ENCODE measurements at regions of chrX and their contacts with region 1.

Region 1: GRCh38 chrX:129654419-129655165 is at the start of gene APLN:
- DNase-seq: peak; percentile 28
- H3K4me3 Mint-ChIP-seq: peak within 1 kb of the TSS; percentile 77
- H3K27ac Mint-ChIP-seq: no peak within 1 kb of the TSS
- H3K4me1 Mint-ChIP-seq: peaks cover 7% of the 10 kb centered on the region
- H3K27me3 Mint-ChIP-seq: peaks cover 53% of the 10 kb centered on the region
- CTCF ChIP-seq: no peak
- total RNA-seq, gene APLN: 0.35 TPM in 1 of 2 replicates, not detected in the other

Region 2: DNA sequence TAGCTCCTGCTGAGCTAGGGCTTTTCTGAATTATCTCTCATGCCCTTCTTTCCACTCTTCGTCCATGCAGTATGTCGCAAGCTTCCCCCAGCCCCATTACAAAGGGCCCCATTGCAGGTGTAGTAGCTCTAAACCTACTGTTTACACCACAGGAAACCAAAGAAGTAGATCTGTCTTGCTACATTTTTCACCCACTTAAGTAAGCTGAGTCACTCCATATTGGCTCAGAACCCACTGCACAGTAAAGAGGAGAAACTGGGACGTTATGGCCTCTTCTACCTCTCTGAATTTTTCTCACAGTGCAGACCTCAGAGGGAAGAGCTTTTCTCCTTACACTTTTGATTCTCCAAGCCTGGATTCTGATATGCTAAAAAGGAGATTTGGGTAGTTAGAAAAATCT is 331.5 kb before region 1 on chrX:
- CTCF ChIA-PET with region 1: no interaction called
- intact Hi-C with region 1: no loop called
- DNase-seq: no peak
- H3K4me3 Mint-ChIP-seq: no peak overlapping the region
- H3K27ac Mint-ChIP-seq: no peak overlapping the region
- H3K4me1 Mint-ChIP-seq: no peaks in the 10 kb centered on the region
- H3K27me3 Mint-ChIP-seq: no peaks in the 10 kb centered on the region
- CTCF ChIP-seq: no peak

Region 3: DNA sequence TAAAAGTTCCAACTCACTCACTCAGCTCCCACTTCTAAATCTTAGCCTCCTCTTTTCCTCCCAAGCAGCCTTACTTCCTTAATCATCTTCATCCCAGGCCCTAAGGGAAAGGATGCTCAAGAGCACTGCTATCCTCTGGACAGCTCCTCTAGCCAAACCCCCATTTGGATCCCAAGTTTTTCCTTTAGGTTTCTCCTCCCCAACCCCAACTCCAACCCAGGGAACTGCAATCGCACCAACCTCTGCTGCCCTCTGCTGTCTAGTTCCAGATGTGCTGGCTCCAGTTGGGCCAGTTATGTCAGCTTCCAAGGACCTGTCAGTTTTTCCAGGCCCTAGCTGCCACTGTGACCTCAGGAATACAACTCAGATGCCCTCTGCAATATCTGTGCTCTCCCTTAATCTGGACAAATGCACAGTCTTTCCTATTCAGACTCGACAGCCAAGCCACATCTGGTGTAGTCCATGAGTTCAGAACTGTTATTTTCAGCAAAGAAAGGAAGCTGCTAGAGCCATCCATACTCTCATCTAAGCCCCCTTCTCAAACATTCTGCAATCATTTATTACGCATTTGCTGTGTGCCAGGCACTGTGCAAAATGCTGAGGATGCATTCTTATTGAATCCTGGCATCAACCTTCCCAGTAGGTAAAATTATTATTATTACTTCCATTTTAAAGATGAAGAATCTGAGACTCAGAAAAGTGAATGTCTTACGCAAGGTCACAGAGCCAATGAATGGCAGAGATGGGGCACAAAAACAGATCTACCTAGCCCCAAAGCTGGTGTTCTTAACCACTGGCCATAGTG is 71.9 kb after region 1 on chrX:
- CTCF ChIA-PET with region 1: interaction called, 17 read pairs
- intact Hi-C with region 1: loop called (anchors 1 kb)
- DNase-seq: peak; percentile 68
- H3K4me3 Mint-ChIP-seq: no peak overlapping the region
- H3K27ac Mint-ChIP-seq: no peak overlapping the region
- H3K4me1 Mint-ChIP-seq: no peaks in the 10 kb centered on the region
- H3K27me3 Mint-ChIP-seq: peaks cover 65% of the 10 kb centered on the region
- CTCF ChIP-seq: peak; percentile 55

Region 4: GRCh38 chrX:130106071-130106470 is 451.5 kb after region 1 on chrX:
- CTCF ChIA-PET with region 1: interaction called, 11 read pairs
- intact Hi-C with region 1: no loop called
- DNase-seq: no peak
- H3K4me3 Mint-ChIP-seq: peak overlapping the region; percentile 47
- H3K27ac Mint-ChIP-seq: no peak overlapping the region
- H3K4me1 Mint-ChIP-seq: peaks cover 58% of the 10 kb centered on the region
- H3K27me3 Mint-ChIP-seq: no peaks in the 10 kb centered on the region
- CTCF ChIP-seq: no peak

Measured in Calu3 (cell line).